ENCODE measurements at regions of chr17 and their contacts with region 1.

Region 1: GRCh38 chr17:49997791-49998703 is 3.0 kb upstream of the DLX3 start:
- DNase-seq: peak; percentile 89
- ATAC-seq: peak; percentile 85
- H3K4me3 Mint-ChIP-seq: no peak overlapping the region
- H3K27ac Mint-ChIP-seq: no peak overlapping the region
- H3K4me1 Mint-ChIP-seq: peaks cover 22% of the 10 kb centered on the region
- H3K27me3 Mint-ChIP-seq: peaks cover 71% of the 10 kb centered on the region
- CTCF ChIP-seq: peak; percentile 95

Region 2: DNA sequence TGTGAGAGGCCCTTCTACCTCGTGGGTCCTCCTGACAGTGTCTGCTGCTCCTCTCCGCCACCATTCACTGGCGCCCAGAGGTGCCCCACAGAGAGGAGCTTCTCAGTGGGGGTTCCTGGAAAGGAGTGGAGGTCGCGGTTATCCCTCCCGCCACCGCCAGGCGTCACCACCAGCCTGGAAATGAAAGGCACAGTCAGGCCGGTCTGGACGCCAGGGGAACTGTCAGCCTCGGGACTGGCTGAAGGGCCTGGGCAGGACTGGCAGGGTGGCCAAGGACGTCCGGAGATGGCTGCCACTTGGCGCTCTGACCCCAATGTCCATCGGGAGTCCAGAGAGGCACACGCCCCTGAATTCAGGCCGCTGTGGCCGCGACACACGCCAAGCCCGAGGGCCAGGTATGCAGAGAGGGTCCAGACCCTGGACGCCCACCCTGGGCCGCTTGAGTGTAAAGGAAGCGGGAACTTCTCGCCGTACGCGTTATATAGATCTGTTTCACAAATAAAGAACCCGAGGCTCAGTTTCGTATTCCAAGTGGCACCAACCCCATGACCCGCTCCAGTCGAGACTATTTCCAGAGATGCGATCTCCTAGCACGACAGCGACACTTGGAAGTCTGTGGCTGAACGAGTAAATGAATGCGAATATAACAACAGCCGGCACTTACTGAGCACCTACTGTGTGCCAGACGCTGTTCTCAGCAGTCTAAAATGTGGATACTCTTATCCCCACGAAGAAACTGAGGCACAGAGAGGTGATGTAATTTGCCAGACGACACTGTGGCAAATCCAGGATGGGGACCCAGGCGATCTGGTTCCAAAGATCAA is 430.0 kb before region 1 on chr17:
- CTCF ChIA-PET with region 1: interaction called, 23 read pairs
- POLR2A ChIA-PET with region 1: no interaction called
- intact Hi-C with region 1: loop called (anchors 10 kb)
- DNase-seq: peak; percentile 90
- ATAC-seq: peak; percentile 61
- H3K4me3 Mint-ChIP-seq: peak overlapping the region; percentile 60
- H3K27ac Mint-ChIP-seq: no peak overlapping the region
- H3K4me1 Mint-ChIP-seq: peaks cover 29% of the 10 kb centered on the region
- H3K27me3 Mint-ChIP-seq: peaks cover 20% of the 10 kb centered on the region
- CTCF ChIP-seq: peak; percentile 97

Region 3: DNA sequence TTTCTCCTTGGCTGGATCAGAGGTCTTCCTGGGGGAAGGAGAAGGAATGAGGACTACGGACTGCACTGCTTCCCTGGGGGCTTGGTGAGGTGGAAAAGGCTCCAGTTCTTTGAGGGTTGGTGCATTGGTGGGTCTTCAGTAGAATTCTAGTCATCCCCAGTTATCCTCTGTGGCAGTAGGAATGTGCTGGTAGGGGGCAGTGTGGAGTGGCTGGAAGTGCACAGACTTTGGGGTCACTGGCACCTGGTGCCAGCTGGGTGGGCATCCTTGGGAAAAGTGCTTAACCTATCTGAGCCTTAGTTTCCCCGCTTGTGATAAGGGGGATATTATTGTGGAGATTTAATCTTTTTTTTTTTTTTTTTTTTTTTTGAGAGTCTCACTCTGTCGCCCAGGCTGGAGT is 156.5 kb before region 1 on chr17:
- CTCF ChIA-PET with region 1: no interaction called
- POLR2A ChIA-PET with region 1: no interaction called
- intact Hi-C with region 1: no loop called
- DNase-seq: no peak
- ATAC-seq: no peak
- H3K4me3 Mint-ChIP-seq: no peak overlapping the region
- H3K27ac Mint-ChIP-seq: no peak overlapping the region
- H3K4me1 Mint-ChIP-seq: peaks cover 7% of the 10 kb centered on the region
- H3K27me3 Mint-ChIP-seq: no peaks in the 10 kb centered on the region
- CTCF ChIP-seq: no peak

Region 4: DNA sequence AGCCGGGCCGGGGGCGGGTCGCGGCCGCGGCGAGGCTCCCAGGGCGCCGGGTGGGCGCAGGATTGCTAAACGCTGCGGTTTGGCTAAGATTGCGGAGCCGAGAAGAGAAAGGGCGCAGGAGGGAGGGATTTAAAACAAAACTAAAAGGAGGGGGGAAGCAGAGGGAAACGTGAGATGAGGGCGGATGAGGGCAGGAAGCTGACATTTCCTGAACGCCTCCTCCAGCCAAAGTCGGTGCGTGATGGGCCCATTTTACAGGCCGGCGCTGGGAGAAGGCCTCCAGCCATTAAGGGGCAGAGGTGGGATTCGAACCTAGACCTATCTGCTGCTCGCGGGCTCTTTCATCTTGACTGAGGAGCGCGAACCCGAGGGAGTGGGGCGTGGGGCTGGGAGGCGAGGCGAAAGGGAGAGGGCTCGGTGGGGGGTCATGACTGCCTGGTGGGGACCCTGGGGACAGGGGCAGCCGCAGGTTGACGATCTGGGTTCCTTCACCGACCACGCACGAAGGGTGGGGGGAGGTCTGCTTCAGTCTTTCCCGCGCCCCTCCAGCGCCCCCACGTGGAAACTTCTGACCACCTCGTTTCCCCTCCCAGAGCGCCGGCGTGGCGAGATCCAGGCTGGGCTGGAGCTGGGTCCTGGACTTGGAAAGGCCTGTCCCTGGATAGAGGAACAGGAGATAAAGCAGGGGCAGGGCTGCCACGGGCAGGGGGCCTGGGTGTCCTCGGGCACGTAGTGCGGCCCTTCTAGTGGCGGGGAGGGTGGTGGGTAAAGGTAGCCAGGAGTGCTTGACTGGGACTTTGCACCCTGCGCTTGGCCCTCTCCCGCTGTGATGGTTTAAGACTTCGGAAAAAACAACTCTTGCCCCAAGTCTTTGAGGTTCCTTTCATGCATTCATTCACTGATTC is 146.4 kb before region 1 on chr17:
- CTCF ChIA-PET with region 1: interaction called, 172 read pairs
- POLR2A ChIA-PET with region 1: interaction called, 4 read pairs
- intact Hi-C with region 1: loop called (anchors 5 kb)
- DNase-seq: peak; percentile 80
- ATAC-seq: peak; percentile 77
- H3K4me3 Mint-ChIP-seq: peak overlapping the region; percentile 76
- H3K27ac Mint-ChIP-seq: peak overlapping the region; percentile 81
- H3K4me1 Mint-ChIP-seq: peaks cover 14% of the 10 kb centered on the region
- H3K27me3 Mint-ChIP-seq: no peaks in the 10 kb centered on the region
- CTCF ChIP-seq: peak; percentile 80

Region 5: DNA sequence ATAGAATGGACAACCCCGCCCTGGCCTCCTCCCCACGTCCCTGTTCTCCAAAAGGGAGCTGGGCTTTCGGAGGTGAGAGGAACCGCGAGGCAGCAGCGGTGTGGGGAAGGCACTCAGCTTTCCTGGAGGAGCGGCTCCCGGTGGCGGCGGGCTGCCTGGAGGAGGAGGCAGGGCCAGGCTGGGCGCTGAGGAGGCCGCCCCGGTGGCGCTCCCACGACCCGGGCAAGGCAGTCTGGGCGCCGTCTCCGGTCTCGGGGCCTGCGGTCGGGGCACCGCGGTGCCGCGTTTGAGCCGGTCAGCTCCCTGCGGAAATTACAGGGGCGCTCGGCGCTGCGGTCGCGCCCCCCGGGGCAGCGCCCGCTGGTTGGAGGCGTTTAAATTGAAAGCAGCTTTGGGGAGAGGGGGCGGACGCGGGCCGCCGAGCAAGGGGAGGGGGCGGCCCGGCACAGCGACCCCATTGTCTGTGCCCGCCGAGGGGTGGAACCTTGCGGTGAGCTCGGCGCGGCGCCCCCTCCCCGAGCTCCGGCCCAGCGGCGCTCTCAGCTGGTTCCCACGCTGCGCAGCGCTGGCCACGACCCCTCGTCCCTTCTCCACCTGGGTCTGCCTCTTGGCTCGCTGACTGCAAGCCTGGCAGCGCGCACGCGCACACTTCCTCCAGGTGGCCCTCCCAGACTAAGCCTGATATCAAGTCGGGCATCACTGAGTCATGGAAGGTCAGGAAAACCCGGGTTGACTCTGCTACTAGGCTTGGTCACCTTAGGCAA is 87.8 kb before region 1 on chr17:
- CTCF ChIA-PET with region 1: interaction called, 49 read pairs
- POLR2A ChIA-PET with region 1: no interaction called
- intact Hi-C with region 1: no loop called
- DNase-seq: peak; percentile 54
- ATAC-seq: peak; percentile 70
- H3K4me3 Mint-ChIP-seq: peak overlapping the region; percentile 12
- H3K27ac Mint-ChIP-seq: no peak overlapping the region
- H3K4me1 Mint-ChIP-seq: peaks cover 5% of the 10 kb centered on the region
- H3K27me3 Mint-ChIP-seq: peaks cover 48% of the 10 kb centered on the region
- CTCF ChIP-seq: no peak

Region 6: DNA sequence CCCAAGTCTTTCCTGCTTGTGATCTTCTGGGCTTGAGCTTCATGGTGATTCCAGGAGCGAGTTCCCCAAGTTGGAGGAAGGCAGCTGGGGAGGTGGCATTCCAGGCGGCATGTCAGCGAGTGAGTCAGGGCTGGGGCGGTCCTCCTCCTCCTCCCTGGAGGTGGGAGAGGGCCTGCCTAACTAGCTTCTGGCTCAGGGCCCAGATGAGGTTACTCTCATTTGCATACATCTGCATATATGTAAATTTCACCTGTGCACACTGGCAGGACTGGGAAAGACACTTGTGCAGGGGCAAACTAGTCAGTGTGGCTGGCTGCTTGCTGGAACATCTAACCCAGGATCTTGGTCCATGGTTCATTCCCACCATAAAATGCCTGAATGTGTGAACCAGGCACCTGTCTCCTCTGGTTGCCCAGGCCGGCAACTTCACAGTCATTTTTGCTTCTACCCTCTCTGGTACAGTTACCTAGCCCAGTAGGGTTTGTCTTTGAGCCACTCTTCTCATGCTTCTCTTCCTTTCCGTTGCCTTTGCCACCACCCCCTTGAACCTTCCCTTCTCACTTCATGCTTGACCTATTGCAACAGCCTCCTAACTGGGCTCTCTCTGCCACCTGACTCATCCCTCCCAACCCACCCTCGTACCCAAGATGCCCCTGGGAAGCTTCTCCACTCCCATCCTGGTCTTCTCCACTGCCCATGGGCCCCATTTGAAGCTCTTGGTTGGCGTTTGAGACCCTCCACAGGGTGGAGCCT is 38.7 kb before region 1 on chr17:
- CTCF ChIA-PET with region 1: interaction called, 62 read pairs
- POLR2A ChIA-PET with region 1: no interaction called
- intact Hi-C with region 1: no loop called
- DNase-seq: no peak
- ATAC-seq: no peak
- H3K4me3 Mint-ChIP-seq: no peak overlapping the region
- H3K27ac Mint-ChIP-seq: no peak overlapping the region
- H3K4me1 Mint-ChIP-seq: peaks cover 9% of the 10 kb centered on the region
- H3K27me3 Mint-ChIP-seq: peaks cover 27% of the 10 kb centered on the region
- CTCF ChIP-seq: no peak

Region 7: GRCh38 chr17:50009282-50009681 is 11.2 kb after region 1 on chr17:
- CTCF ChIA-PET with region 1: interaction called, 14 read pairs
- POLR2A ChIA-PET with region 1: no interaction called
- intact Hi-C with region 1: no loop called
- DNase-seq: no peak
- ATAC-seq: no peak
- H3K4me3 Mint-ChIP-seq: no peak overlapping the region
- H3K27ac Mint-ChIP-seq: no peak overlapping the region
- H3K4me1 Mint-ChIP-seq: no peaks in the 10 kb centered on the region
- H3K27me3 Mint-ChIP-seq: peaks cover 19% of the 10 kb centered on the region
- CTCF ChIP-seq: no peak

Region 8: DNA sequence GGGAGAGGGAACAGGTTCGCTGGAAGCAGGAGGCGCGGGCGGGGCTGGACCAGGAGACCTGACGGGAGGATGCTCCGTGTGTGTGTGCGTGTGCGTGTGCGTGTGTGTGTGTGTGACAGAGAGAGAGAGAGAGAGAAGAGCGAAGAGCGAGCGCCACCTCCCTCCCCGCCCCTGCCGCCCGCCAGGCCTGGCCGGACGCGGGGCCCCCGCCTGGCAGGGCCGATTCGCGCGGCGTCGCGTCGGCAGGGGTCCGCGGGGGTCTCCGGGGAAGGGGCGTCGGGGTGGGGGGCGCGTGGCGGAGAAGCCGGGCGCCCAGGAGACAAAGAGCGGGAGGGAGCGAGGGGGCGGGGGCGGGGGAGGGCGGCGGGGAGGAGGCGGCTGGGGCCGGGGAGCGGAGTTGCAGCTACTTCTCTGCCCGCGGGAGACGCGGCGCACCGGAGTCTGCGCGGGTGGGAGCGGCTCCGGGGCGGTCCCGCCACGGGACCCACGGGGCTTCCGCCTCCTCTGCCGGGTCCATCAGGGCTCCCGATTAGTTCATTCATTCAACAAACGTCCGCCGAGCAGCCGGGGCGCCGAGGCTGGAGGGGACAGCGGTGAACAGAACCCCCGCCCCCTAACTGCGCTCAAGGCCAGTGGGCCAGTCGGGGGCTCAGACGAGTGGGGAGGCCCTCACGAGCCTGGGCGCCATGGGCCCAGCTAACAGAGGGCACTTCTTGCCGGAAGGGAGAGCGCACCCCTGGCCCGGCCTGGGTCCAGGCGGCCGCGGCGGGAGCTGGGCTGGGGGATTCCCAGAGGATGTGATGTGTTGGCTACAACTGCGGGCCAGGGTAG is 131.9 kb after region 1 on chr17 and contains the start of gene SAMD14:
- CTCF ChIA-PET with region 1: no interaction called
- POLR2A ChIA-PET with region 1: no interaction called
- intact Hi-C with region 1: no loop called
- DNase-seq: peak; percentile 61
- ATAC-seq: peak; percentile 53
- H3K4me3 Mint-ChIP-seq: peak within 1 kb of the TSS; percentile 58
- H3K27ac Mint-ChIP-seq: peak within 1 kb of the TSS; percentile 62
- H3K4me1 Mint-ChIP-seq: peaks cover 22% of the 10 kb centered on the region
- H3K27me3 Mint-ChIP-seq: peaks cover 23% of the 10 kb centered on the region
- CTCF ChIP-seq: no peak
- total RNA-seq, gene SAMD14: 0.47 to 1.3 TPM

Measured in activated CD8-positive, alpha-beta T cell treated with anti-CD3 and anti-CD28 coated beads for 36 hours (primary cell).